K562 (cell line): ENCODE measurements at regions of chr15 and their contacts with region 1.

Region 1: GRCh38 chr15:26891448-26892181 is 24.8 kb downstream of the GABRA5 start:
- DNase-seq: peak; percentile 61 to 83 (median 65)
- ATAC-seq: peak; percentile 93
- H3K4me3 ChIP-seq: no peak overlapping the region
- H3K27ac ChIP-seq: no peak overlapping the region
- H3K4me1 ChIP-seq: peaks cover 0 to 4% of the 10 kb centered on the region in 2 experiments; a peak in 1 of 5 replicates
- H3K27me3 ChIP-seq: peaks cover 2 to 9% of the 10 kb centered on the region in 2 experiments; a peak in 3 of 5 replicates
- CTCF ChIP-seq: peak; percentile 83 to 85 (median 84)
- EP300 ChIP-seq: no peak
- POLR2A ChIP-seq: no peak
- RAD21 ChIP-seq: peak; percentile 69 to 88

Region 2: GRCh38 chr15:27017168-27017809 is 125.7 kb after region 1 on chr15:
- CTCF ChIA-PET with region 1: interaction called, 20 read pairs
- POLR2A ChIA-PET with region 1: no interaction called
- in situ Hi-C with region 1: no loop called
- intact Hi-C with region 1: loop called (anchors 1 kb)
- DNase-seq: peak; percentile 71 to 80 (median 74)
- ATAC-seq: peak; percentile 99
- H3K4me3 ChIP-seq: no peak overlapping the region
- H3K27ac ChIP-seq: no peak overlapping the region
- H3K4me1 ChIP-seq: no peaks in the 10 kb centered on the region
- H3K27me3 ChIP-seq: peaks cover 2 to 8% of the 10 kb centered on the region in 2 experiments; a peak in 4 of 5 replicates
- CTCF ChIP-seq: peak; percentile 93 to 99 (median 99)
- EP300 ChIP-seq: no peak
- POLR2A ChIP-seq: no peak
- RAD21 ChIP-seq: peak; percentile 40 to 87

Region 3: DNA sequence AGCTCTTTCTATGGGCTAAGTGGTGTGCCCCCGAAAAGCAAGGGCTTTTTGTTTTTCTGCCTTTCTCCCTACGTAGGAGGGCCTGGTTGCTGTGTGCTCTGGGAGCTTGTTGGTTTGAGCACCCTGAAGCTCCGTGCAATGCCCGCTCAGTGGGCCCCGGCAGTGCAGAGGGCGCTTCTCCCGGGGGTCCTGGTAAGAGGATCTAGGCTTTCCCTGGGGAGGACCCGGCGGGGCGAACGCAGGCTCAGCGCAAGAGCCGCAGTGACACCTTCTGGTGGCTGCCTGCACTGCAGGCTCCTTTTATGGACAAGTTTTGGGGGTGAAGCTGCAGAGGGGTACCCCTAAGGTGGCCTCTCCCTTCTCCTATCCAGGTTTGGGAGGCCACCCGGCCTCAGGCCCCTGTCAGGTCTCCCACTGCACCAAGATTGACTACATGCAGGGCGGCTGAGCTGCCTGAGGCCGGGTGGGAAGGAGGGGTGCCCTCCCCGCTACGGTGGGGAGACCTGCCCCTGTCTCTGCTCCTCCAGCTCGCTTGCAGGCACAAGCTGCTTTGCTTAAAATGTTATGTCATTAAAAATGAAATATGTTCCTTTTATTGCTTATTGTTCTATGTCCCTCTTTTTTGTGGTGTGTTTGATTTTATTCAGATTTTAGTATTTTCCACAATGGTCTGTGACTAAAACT is 467.3 kb after region 1 on chr15:
- CTCF ChIA-PET with region 1: interaction called, 9 read pairs
- POLR2A ChIA-PET with region 1: interaction called, 3 read pairs
- in situ Hi-C with region 1: loop called (anchors 5 kb)
- intact Hi-C with region 1: loop called (anchors 2 kb)
- DNase-seq: peak; percentile 49 to 63 (median 55)
- ATAC-seq: peak; percentile 85
- H3K4me3 ChIP-seq: no peak overlapping the region
- H3K27ac ChIP-seq: no peak overlapping the region
- H3K4me1 ChIP-seq: peaks cover 0 to 6% of the 10 kb centered on the region in 2 experiments; a peak in 2 of 5 replicates
- H3K27me3 ChIP-seq: no peaks in the 10 kb centered on the region
- CTCF ChIP-seq: peak; percentile 71 to 86 (median 77)
- EP300 ChIP-seq: no peak
- POLR2A ChIP-seq: no peak
- RAD21 ChIP-seq: peak; percentile 63 to 79

Region 4: DNA sequence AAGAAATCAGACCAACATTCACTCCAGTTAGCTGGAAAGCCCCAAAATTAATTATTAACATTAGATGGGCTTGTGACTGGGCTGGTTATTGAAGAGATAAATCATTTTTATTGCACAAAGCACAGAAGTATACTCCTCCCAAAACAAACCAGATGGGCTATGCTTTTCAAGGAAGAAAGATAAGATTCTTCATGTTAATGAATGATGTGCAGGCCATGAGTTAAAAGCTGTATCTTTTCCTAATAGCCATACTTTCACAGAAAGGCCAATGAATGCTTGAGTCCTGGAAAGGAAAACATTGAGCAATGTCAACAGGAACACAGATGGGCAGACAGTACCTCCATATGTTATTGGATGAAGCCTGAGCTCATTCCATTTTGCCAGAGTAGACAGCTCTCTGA is 1152.1 kb after region 1 on chr15:
- CTCF ChIA-PET with region 1: no interaction called
- POLR2A ChIA-PET with region 1: no interaction called
- in situ Hi-C with region 1: loop called (anchors 25 kb)
- intact Hi-C with region 1: no loop called
- DNase-seq: no peak
- ATAC-seq: no peak
- H3K4me3 ChIP-seq: no peak overlapping the region
- H3K27ac ChIP-seq: no peak overlapping the region
- H3K4me1 ChIP-seq: no peaks in the 10 kb centered on the region
- H3K27me3 ChIP-seq: no peaks in the 10 kb centered on the region
- CTCF ChIP-seq: no peak
- EP300 ChIP-seq: no peak
- POLR2A ChIP-seq: no peak
- RAD21 ChIP-seq: no peak

Region 5: GRCh38 chr15:28123408-28124023 is 1231.9 kb after region 1 on chr15:
- CTCF ChIA-PET with region 1: interaction called, 3 read pairs
- POLR2A ChIA-PET with region 1: no interaction called
- in situ Hi-C with region 1: loop called (anchors 10 kb)
- intact Hi-C with region 1: loop called (anchors 2 kb)
- DNase-seq: peak; percentile 65 to 71 (median 68)
- ATAC-seq: peak; percentile 95
- H3K4me3 ChIP-seq: no peak overlapping the region
- H3K27ac ChIP-seq: no peak overlapping the region
- H3K4me1 ChIP-seq: peaks cover 0 to 3% of the 10 kb centered on the region in 2 experiments; a peak in 1 of 5 replicates
- H3K27me3 ChIP-seq: no peaks in the 10 kb centered on the region
- CTCF ChIP-seq: peak; percentile 75 to 81 (median 77)
- EP300 ChIP-seq: no peak
- POLR2A ChIP-seq: no peak
- RAD21 ChIP-seq: peak in 1 of 2 experiments; percentile 58; a peak in 2 of 4 replicates